CD8-positive, alpha-beta T cell (primary cell): ENCODE measurements at regions of chr17 and their contacts with region 1.

Region 1: DNA sequence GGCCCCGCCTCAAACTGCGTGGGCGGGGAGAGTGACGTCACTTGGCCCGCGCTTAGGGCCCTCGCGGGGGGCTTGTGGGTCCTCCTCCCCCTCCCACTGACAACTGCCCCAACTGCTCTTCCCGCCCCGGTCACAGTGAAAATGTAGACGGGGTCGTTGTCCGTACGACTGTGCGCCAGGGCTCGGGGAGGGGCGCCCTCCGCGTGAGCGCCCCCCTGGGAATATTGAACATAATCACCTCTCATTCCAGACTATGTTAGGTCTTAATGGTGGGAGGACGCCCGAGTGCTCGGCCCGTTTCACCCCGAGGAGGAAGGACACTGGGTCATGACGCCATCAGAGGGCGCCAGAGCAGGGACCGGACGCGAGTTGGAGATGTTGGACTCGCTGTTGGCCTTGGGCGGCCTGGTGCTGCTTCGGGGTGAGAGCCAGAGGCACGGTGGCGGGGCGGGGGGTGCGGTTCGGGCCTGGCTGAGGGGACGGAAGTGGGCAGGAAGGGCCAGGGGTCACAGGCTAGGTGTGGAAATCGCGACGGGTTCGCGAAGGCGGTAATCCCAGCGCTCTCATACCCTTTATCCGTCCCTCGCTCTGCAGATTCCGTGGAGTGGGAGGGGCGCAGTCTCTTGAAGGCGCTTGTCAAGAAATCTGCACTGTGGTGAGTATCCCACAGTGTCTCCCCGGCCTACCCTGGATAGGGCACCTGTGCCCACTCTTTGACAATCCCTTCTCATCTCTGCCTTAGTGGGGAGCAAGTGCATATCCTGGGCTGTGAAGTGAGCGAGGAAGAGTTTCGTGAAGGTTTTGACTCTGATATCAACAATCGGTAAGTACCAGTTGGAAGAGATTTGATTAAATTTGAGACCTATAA is at the start of gene ELP5:
- DNase-seq: peak; percentile 73 to 99 (median 87)
- ATAC-seq: peak; percentile 48
- H3K4me3 ChIP-seq: peak within 1 kb of the TSS; percentile 81 to 92
- H3K4me3 Mint-ChIP-seq: peak within 1 kb of the TSS; percentile 97
- H3K27ac ChIP-seq: peak within 1 kb of the TSS; percentile 99
- H3K27ac Mint-ChIP-seq: peak within 1 kb of the TSS; percentile 100
- H3K4me1 ChIP-seq: peaks cover 31% of the 10 kb centered on the region
- H3K4me1 Mint-ChIP-seq: peaks cover 44% of the 10 kb centered on the region
- H3K27me3 ChIP-seq: no peaks in the 10 kb centered on the region
- H3K27me3 Mint-ChIP-seq: no peaks in the 10 kb centered on the region
- CTCF ChIP-seq: no peak
- total RNA-seq, gene ELP5: 38.9 to 39.0 TPM

Region 2: GRCh38 chr17:7035591-7036368 is 216.6 kb before region 1 on chr17 and contains the start of gene SLC16A13:
- CTCF ChIA-PET with region 1: no interaction called
- POLR2A ChIA-PET with region 1: no interaction called
- intact Hi-C with region 1: loop called in 1 of 2 experiments (anchors 5 kb)
- DNase-seq: peak; percentile 95 to 100 (median 98)
- ATAC-seq: peak; percentile 92
- H3K4me3 ChIP-seq: peak within 1 kb of the TSS; percentile 59 to 94
- H3K4me3 Mint-ChIP-seq: peak within 1 kb of the TSS; percentile 92
- H3K27ac ChIP-seq: peak within 1 kb of the TSS; percentile 85 to 98
- H3K27ac Mint-ChIP-seq: peak within 1 kb of the TSS; percentile 98
- H3K4me1 ChIP-seq: peaks cover 49% of the 10 kb centered on the region
- H3K4me1 Mint-ChIP-seq: peaks cover 50% of the 10 kb centered on the region
- H3K27me3 ChIP-seq: no peaks in the 10 kb centered on the region
- H3K27me3 Mint-ChIP-seq: no peaks in the 10 kb centered on the region
- CTCF ChIP-seq: no peak
- total RNA-seq, gene SLC16A13: 1.8 to 1.9 TPM

Region 3: DNA sequence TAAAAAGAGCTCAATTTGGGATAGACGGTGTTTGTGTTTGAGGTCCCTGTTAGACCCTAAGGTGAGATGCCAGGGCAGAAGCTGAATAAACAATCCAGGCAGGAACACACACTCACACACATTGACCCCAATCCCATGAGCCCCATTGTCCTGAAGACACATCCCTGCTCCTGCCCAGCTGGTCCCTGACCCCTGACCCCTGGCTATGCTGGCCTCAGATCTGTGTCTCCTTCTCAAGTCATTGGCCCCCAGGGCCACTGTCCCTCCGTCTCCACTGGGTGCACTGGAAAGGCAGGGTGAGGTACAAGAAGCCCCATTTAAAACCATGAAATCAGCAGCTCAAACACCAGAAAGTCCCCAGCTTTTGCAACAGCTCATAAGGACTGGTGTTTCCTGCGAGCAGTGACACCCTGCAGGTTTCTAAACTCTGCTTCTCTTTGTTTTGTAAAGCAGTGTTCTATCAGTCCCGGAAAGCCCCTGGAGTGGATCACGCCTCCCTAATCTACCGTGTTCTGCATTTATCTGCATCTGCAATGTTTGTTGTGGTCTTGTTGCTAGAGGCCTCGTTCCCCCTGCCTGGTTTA is 119.8 kb before region 1 on chr17:
- CTCF ChIA-PET with region 1: no interaction called
- POLR2A ChIA-PET with region 1: no interaction called
- intact Hi-C with region 1: no loop called
- DNase-seq: peak; percentile 11 to 89 (median 58)
- ATAC-seq: peak; percentile 98
- H3K4me3 ChIP-seq: no peak overlapping the region
- H3K4me3 Mint-ChIP-seq: peak overlapping the region; percentile 69
- H3K27ac ChIP-seq: peak overlapping the region; percentile 34 to 42
- H3K27ac Mint-ChIP-seq: peak overlapping the region; percentile 95
- H3K4me1 ChIP-seq: peaks cover 6% of the 10 kb centered on the region
- H3K4me1 Mint-ChIP-seq: peaks cover 25% of the 10 kb centered on the region
- H3K27me3 ChIP-seq: no peaks in the 10 kb centered on the region
- H3K27me3 Mint-ChIP-seq: peaks cover 2% of the 10 kb centered on the region
- CTCF ChIP-seq: no peak

Region 4: DNA sequence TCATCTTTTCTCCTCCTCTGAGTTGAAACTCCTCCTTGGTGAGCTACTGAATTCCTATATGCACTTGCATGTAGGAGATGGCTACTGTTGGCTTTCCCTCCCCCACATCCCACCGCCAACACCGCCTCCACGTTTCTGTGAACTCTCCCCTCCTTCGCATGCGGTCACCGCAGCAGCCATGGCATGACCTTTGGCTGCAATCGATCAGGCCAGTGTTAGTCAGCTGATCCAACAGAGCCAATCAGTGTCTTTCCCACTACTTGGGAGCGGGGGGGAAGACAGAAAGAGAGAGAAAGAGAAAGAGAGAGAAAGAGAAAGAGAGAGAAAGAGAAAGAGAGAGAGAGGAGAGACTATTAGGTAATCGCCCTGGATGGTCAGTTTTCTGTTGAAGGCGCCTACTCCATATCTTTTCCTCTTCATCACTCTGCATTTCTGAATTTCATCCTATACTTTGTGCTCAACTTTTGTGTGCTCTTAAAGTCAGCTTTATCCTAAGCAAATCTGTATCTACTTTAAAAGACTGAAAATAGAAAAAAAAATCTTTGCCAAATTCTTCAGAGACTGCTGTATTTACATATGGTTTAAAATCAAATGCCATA is 96.0 kb before region 1 on chr17:
- CTCF ChIA-PET with region 1: no interaction called
- POLR2A ChIA-PET with region 1: no interaction called
- intact Hi-C with region 1: no loop called
- DNase-seq: no peak
- ATAC-seq: no peak
- H3K4me3 ChIP-seq: no peak overlapping the region
- H3K4me3 Mint-ChIP-seq: no peak overlapping the region
- H3K27ac ChIP-seq: no peak overlapping the region
- H3K27ac Mint-ChIP-seq: no peak overlapping the region
- H3K4me1 ChIP-seq: no peaks in the 10 kb centered on the region
- H3K4me1 Mint-ChIP-seq: no peaks in the 10 kb centered on the region
- H3K27me3 ChIP-seq: peaks cover 0 to 2% of the 10 kb centered on the region in 2 experiments
- H3K27me3 Mint-ChIP-seq: peaks cover 17% of the 10 kb centered on the region
- CTCF ChIP-seq: no peak

Region 5: DNA sequence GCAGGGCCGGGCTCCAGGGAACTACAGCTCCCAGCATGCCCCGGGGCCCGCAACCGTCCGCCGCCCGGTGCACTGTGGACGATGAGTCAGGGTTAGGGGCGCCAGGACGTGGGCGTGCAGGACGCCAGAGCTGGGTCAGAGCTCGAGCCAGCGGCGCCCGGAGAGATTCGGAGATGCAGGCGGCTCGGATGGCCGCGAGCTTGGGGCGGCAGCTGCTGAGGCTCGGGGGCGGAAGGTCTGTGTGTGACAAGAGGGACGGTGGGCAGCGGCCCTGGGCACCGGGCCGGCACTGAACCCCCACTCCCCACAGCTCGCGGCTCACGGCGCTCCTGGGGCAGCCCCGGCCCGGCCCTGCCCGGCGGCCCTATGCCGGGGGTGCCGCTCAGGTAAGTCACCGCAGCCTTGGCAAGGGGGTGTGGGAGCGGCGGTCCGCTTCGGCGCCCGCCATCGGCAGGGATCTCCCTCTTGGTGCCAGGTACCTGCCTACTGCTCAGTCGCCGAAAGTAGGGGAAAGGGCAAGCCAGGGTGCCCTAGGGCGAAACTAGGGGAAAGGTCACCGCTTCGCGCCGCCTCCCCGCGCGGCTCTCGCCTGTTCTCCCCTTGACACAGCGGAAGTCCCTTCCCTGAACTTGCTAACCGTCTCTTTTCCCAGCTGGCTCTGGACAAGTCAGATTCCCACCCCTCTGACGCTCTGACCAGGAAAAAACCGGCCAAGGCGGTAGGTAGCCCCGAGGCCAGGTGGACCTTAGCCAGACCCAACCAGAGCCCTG is 32.4 kb before region 1 on chr17 and contains the starts of genes ACADVL and DLG4:
- CTCF ChIA-PET with region 1: no interaction called
- POLR2A ChIA-PET with region 1: interaction called, 5 read pairs
- intact Hi-C with region 1: loop called in 1 of 2 experiments (anchors 1 kb)
- DNase-seq: peak in 8 of 9 experiments; percentile 67 to 86 (median 82)
- ATAC-seq: peak; percentile 54
- H3K4me3 ChIP-seq: peak within 1 kb of the TSS; percentile 74 to 97
- H3K4me3 Mint-ChIP-seq: peak within 1 kb of the TSS; percentile 91
- H3K27ac ChIP-seq: peak within 1 kb of the TSS; percentile 35 to 86
- H3K27ac Mint-ChIP-seq: peak within 1 kb of the TSS; percentile 94
- H3K4me1 ChIP-seq: peaks cover 52% of the 10 kb centered on the region
- H3K4me1 Mint-ChIP-seq: peaks cover 55% of the 10 kb centered on the region
- H3K27me3 ChIP-seq: no peaks in the 10 kb centered on the region
- H3K27me3 Mint-ChIP-seq: no peaks in the 10 kb centered on the region
- CTCF ChIP-seq: no peak
- total RNA-seq, gene ACADVL: 264 to 275 TPM
- total RNA-seq, gene DLG4: 5.8 to 8.1 TPM

Region 6: DNA sequence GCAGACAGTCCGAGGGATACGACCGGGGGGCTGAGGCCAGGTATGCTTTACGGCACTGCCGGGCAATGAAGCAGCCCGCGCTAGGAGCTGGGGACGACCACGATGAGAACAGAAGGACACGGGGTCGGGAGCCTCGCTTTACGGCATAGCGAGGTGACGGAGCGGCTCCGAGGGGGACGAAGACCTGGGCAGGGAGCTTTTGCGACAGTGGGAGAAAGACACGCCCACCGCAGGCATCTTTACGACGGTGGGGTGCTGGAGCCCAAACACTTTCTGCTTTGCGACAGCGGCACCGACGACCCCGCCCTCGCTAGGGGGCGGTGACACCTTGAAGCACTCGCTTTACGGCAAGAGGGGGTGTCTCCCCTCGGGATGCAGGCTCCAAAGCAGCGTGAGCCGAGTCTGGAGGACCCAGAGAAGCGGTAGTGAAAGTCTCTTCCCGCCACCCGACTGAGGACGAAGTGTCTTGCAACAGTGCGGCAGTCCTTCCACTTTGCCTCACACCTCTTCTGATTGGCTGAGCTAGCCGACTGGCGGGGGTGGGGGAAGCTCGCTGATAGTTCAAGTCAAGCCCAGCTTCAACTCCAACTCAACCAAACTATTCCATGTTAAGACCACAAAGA is 77.1 kb after region 1 on chr17:
- CTCF ChIA-PET with region 1: no interaction called
- POLR2A ChIA-PET with region 1: no interaction called
- intact Hi-C with region 1: loop called in 1 of 2 experiments (anchors 1 kb)
- DNase-seq: peak; percentile 92 to 99 (median 96)
- ATAC-seq: peak; percentile 79
- H3K4me3 ChIP-seq: peak overlapping the region; percentile 96 to 100
- H3K4me3 Mint-ChIP-seq: peak overlapping the region; percentile 98
- H3K27ac ChIP-seq: peak overlapping the region; percentile 80 to 95
- H3K27ac Mint-ChIP-seq: peak overlapping the region; percentile 96
- H3K4me1 ChIP-seq: peaks cover 36% of the 10 kb centered on the region
- H3K4me1 Mint-ChIP-seq: peaks cover 37% of the 10 kb centered on the region
- H3K27me3 ChIP-seq: no peaks in the 10 kb centered on the region
- H3K27me3 Mint-ChIP-seq: no peaks in the 10 kb centered on the region
- CTCF ChIP-seq: no peak